Activated CD4-positive, alpha-beta memory T cell treated with anti-CD3 and anti-CD28 coated beads for 36 hours (primary cell): ENCODE measurements at regions of chr7 and their contacts with region 1.

Region 1: GRCh38 chr7:44999245-45000095 is 531 bp upstream of the CCM2 start:
- DNase-seq: peak; percentile 100
- H3K4me3 Mint-ChIP-seq: peak overlapping the region; percentile 89
- H3K27ac Mint-ChIP-seq: peak overlapping the region; percentile 95
- H3K4me1 Mint-ChIP-seq: peaks cover 58% of the 10 kb centered on the region
- H3K27me3 Mint-ChIP-seq: no peaks in the 10 kb centered on the region

Region 2: GRCh38 chr7:44200647-44201461 is 798.6 kb before region 1 on chr7 and contains the start of gene YKT6:
- CTCF ChIA-PET with region 1: no interaction called
- POLR2A ChIA-PET with region 1: no interaction called
- intact Hi-C with region 1: loop called (anchors 2 kb)
- DNase-seq: peak; percentile 97
- H3K4me3 Mint-ChIP-seq: peak within 1 kb of the TSS; percentile 83
- H3K27ac Mint-ChIP-seq: peak within 1 kb of the TSS; percentile 23
- H3K4me1 Mint-ChIP-seq: peaks cover 28% of the 10 kb centered on the region
- H3K27me3 Mint-ChIP-seq: peaks cover 9% of the 10 kb centered on the region
- total RNA-seq, gene YKT6: 57.0 to 60.4 TPM

Region 3: GRCh38 chr7:44898039-44898438 is 101.4 kb before region 1 on chr7:
- CTCF ChIA-PET with region 1: no interaction called
- POLR2A ChIA-PET with region 1: no interaction called
- intact Hi-C with region 1: no loop called
- DNase-seq: no peak
- H3K4me3 Mint-ChIP-seq: no peak overlapping the region
- H3K27ac Mint-ChIP-seq: no peak overlapping the region
- H3K4me1 Mint-ChIP-seq: peaks cover 9% of the 10 kb centered on the region
- H3K27me3 Mint-ChIP-seq: no peaks in the 10 kb centered on the region

Region 4: DNA sequence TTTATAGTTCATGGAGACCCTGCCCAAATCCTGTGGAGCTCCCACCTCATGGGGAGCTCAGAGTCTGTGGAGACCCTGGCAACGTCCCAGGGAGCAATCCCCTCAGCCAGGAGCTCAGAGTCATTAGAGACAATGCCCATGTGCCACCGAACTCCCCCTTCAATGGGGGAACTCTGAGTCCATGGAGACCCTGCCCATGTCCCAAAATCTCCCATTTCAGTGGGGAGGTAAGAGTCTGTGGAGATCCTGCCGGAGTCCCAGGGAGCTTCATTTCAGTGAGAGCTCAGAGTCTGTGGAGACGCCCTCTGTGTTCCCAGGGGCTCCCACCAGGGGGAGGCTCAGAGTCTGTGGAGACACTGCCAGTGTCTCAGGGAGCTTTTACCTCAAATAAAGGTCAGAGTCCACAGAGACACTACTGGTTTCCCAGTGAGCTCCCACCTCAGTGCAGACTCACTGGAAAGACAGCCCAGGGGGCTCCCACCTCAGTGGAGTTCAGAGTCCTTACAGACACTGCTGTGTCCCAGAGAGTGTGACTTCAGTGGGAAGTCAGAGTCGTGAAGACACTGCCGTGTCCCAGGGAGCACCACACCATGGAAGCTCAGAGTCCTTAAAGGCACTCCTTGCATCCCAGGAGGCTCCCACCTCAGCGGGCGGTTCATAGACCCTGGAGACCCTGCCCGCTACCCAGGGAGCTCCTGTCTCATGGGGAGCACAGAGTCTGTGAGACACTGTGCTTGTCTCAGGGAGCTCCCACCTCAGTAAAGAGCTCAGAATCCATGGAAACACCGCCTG is 25.7 kb before region 1 on chr7:
- CTCF ChIA-PET with region 1: interaction called, 46 read pairs
- POLR2A ChIA-PET with region 1: interaction called, 208 read pairs
- intact Hi-C with region 1: loop called (anchors 1 kb)
- DNase-seq: peak; percentile 67
- H3K4me3 Mint-ChIP-seq: no peak overlapping the region
- H3K27ac Mint-ChIP-seq: peak overlapping the region; percentile 76
- H3K4me1 Mint-ChIP-seq: peaks cover 33% of the 10 kb centered on the region
- H3K27me3 Mint-ChIP-seq: no peaks in the 10 kb centered on the region

Region 5: DNA sequence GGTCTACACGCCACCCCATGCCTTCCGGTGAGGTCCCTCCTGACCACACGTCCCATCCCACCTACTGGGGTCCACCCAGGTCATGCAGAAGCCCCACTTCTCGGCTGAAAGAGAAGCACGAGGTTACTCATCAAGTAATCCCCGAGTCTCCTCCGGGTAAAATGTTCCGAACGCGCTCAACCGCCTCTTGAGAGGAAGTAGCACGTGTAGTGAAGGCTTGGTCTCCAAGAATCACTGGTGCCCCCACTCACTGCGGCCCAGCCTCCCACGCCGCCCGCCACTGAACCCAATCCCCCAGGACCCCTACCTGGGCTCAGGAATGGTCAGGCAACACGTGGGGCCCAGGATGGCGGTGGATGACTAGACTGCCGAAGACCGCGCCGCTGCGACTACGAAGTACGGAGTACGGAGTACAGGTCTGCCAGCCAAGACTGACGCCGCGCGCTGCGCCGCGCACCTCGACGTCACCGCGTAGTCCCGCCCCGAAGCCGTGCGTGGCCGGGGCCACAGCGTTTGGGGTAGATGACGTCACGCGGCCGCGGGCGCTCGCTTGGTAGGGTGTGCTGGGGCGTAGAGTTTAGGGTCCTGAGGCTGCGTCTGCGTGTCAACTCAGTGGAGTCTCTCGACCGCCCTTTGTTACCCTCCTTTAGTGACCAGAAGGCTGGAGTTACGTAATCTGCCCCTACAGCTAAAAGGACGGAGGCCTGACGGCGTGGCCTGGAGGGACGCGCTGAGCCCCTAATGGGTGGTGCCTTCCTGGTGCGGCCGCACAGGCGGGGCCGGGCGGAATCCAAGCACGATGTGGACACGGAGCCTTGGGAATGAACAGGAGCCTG is 13.0 kb before region 1 on chr7:
- CTCF ChIA-PET with region 1: interaction called, 46 read pairs
- POLR2A ChIA-PET with region 1: interaction called, 208 read pairs
- intact Hi-C with region 1: loop called (anchors 1 kb)
- DNase-seq: peak; percentile 97
- H3K4me3 Mint-ChIP-seq: peak overlapping the region; percentile 99
- H3K27ac Mint-ChIP-seq: peak overlapping the region; percentile 100
- H3K4me1 Mint-ChIP-seq: peaks cover 59% of the 10 kb centered on the region
- H3K27me3 Mint-ChIP-seq: no peaks in the 10 kb centered on the region

Region 6: DNA sequence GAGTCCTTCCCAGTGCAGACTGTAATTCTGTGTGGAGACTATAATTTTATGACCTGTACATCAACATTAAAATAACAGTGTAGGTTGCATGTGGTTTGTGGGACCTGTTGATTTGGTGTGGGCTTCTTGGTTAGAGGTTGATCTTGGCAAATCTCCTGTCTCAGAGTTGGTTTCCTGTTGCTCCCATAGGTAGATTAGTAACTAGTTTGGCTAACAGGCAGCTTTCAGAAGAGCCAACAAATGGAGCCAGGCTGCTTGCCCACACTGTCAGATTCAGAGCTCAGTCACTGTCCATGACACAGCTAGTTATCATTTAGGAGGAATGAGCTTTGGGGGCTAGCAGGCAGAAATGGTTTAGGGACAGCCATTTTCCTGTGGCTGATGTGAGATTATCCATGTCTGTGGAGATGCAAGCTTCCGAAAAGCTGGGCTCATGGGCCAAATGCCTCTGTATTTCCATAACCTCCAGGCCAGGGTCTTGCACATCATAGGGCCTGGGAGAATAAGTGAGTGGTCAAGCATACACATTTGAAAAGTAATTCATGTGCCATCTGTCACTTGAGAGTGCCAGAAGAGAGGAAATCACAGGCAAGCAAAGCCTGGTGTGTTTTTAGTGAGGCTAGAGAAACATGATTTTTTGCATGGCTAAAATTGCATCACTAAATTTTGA is 33.9 kb after region 1 on chr7:
- CTCF ChIA-PET with region 1: interaction called, 8 read pairs
- POLR2A ChIA-PET with region 1: interaction called, 30 read pairs
- intact Hi-C with region 1: no loop called
- DNase-seq: peak; percentile 47
- H3K4me3 Mint-ChIP-seq: peak overlapping the region; percentile 6
- H3K27ac Mint-ChIP-seq: peak overlapping the region; percentile 83
- H3K4me1 Mint-ChIP-seq: peaks cover 85% of the 10 kb centered on the region
- H3K27me3 Mint-ChIP-seq: no peaks in the 10 kb centered on the region

Region 7: GRCh38 chr7:45136106-45137060 is 136.9 kb after region 1 on chr7:
- CTCF ChIA-PET with region 1: interaction called, 14 read pairs
- POLR2A ChIA-PET with region 1: interaction called, 3 read pairs
- intact Hi-C with region 1: no loop called
- DNase-seq: peak; percentile 81
- H3K4me3 Mint-ChIP-seq: no peak overlapping the region
- H3K27ac Mint-ChIP-seq: peak overlapping the region; percentile 9
- H3K4me1 Mint-ChIP-seq: peaks cover 9% of the 10 kb centered on the region
- H3K27me3 Mint-ChIP-seq: peaks cover 1% of the 10 kb centered on the region

Region 8: DNA sequence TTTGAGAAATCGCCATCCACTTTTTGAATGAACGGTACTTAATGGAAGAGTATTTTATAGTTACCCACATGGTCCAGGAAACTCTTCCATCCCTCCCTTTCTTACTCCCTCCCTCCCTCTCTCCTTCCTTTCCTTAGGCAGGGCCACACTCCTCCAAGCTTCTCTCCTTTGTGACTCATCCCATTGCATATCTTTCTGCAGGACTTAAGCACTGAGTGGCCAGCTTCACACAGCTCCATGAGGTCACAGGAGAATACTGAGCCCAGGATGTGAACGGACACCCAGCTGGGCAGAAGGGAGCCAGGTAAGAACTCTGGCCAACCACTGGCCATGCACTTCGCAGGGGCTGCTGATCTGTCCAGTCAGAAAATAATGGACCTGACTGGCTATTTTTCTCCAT is 385.0 kb after region 1 on chr7:
- CTCF ChIA-PET with region 1: no interaction called
- POLR2A ChIA-PET with region 1: no interaction called
- intact Hi-C with region 1: no loop called
- DNase-seq: no peak
- H3K4me3 Mint-ChIP-seq: no peak overlapping the region
- H3K27ac Mint-ChIP-seq: no peak overlapping the region
- H3K4me1 Mint-ChIP-seq: no peaks in the 10 kb centered on the region
- H3K27me3 Mint-ChIP-seq: peaks cover 7% of the 10 kb centered on the region